ENCODE measurements at regions of chr4 and their contacts with region 1.

Region 1: DNA sequence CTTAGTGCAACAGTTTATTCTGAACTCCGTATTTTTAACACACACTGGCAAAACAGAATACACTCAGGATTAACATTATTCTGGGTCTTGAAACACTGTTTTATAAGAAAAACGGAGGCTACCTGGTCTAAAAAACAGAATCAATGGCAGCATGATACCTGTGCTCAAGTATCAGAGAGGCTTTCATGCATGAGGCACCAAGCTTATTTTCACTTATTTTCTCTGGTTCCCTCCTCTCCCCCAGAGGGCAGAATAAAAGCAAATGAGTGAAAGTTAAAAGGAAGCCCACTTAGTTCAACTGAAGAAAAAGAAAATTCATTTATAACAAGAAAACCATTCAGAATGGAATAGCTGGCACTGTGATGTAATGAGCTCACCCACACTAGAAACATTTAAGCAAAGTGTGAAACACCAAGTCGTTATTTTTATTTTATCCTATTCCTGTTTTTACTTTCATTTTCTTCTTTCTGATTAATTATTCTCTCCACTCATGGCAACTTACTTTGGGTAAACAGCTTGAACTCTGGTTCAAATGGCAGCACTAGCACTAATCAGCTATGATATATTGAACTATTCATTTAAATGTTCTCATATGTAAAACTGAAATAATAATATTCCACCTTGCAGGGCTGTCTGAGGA is 211.8 kb downstream of the PPP3CA start:
- ATAC-seq: no peak
- H3K4me3 ChIP-seq: no peak overlapping the region
- H3K27ac ChIP-seq: no peak overlapping the region
- H3K4me1 ChIP-seq: no peaks in the 10 kb centered on the region

Region 2: DNA sequence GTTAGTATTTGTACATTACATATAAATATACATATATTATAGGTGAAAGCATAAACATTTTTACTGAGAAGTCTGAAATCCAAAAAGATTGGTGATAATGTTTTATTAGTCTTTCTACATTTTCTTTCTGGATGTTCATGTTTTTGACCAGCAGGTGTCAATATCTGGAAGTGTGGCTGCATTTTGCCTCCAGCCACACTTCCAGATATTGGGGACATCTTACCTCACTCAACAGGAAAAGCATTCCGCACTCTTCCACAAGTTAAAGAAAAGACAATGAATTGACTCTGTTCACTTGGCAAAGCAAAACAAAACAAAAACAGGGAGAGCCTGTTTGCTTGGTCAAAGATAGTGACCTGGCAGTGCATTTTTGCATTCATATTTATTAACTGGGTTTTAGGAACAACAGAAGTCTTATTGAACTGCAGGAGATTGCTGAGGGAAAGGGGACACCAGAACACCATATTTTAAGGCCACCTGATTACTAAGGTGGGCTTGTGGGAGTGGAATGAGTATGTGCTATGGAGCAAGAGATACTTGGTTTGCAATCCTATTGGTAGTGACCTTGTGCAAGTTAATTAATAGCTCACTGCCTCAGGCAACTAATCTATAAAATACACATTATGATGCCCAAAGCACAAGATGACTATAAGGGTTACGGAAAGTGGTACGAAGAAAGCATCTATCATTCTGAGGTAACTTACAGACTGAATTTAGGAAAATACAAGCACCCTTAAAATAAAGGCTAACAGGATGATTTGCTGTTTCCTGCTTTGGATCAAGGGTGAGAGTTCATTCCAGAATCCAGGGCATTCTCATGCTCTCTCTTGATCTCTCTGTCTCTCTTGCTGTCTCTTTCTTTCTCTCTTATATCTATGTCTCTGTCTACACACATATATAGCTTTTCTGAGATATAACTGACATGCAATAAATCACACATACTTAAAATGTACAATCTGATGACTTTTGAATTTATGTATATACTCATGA is 227.7 kb before region 1 on chr4:
- in situ Hi-C with region 1: loop called in 1 of 9 experiments (anchors 25 kb)
- ATAC-seq: no peak
- H3K4me3 ChIP-seq: no peak overlapping the region
- H3K27ac ChIP-seq: no peak overlapping the region
- H3K4me1 ChIP-seq: no peaks in the 10 kb centered on the region